Activated CD4-positive, alpha-beta T cell treated with anti-CD3 and anti-CD28 coated beads for 36 hours (primary cell): ENCODE measurements at regions of chr5 and their contacts with region 1.

Region 1: DNA sequence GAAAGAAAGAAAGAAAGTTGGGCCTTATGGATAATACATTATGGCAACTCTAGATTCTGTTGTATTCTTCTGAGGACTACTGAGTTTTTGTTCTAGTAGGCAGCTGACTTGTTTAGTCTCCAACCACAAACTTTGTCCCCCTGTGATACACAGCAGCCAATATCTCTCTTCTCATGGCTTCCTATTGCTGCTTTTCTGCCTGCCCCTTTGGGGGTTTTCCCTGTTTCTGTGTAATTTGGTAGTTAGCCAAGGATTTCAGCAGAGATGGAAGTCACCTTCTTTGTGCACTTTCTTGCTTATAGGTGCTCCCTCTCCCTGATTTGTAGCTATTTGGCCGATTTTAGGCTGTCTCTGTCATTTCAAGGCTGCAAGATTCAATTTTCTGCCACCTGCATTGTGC is 109.6 kb downstream of the FGF1 start:
- DNase-seq: no peak
- ATAC-seq: no peak
- H3K4me3 Mint-ChIP-seq: no peak overlapping the region
- H3K27ac Mint-ChIP-seq: no peak overlapping the region
- H3K4me1 Mint-ChIP-seq: peaks cover 17% of the 10 kb centered on the region
- H3K27me3 Mint-ChIP-seq: no peaks in the 10 kb centered on the region

Region 2: GRCh38 chr5:142324871-142325724 is 251.2 kb before region 1 on chr5 and contains the start of gene SPRY4:
- CTCF ChIA-PET with region 1: no interaction called
- POLR2A ChIA-PET with region 1: no interaction called
- intact Hi-C with region 1: no loop called
- DNase-seq: peak; percentile 95
- ATAC-seq: peak; percentile 89
- H3K4me3 Mint-ChIP-seq: peak within 1 kb of the TSS; percentile 77
- H3K27ac Mint-ChIP-seq: peak within 1 kb of the TSS; percentile 79
- H3K4me1 Mint-ChIP-seq: peaks cover 37% of the 10 kb centered on the region
- H3K27me3 Mint-ChIP-seq: peaks cover 36% of the 10 kb centered on the region
- total RNA-seq, gene SPRY4: 0.93 to 0.98 TPM

Region 3: GRCh38 chr5:142446131-142446959 is 130.0 kb before region 1 on chr5:
- CTCF ChIA-PET with region 1: no interaction called
- POLR2A ChIA-PET with region 1: no interaction called
- intact Hi-C with region 1: no loop called
- DNase-seq: no peak
- ATAC-seq: no peak
- H3K4me3 Mint-ChIP-seq: no peak overlapping the region
- H3K27ac Mint-ChIP-seq: no peak overlapping the region
- H3K4me1 Mint-ChIP-seq: peaks cover 16% of the 10 kb centered on the region
- H3K27me3 Mint-ChIP-seq: no peaks in the 10 kb centered on the region

Region 4: GRCh38 chr5:142587354-142587965 is 11.2 kb after region 1 on chr5:
- CTCF ChIA-PET with region 1: interaction called, 15 read pairs
- POLR2A ChIA-PET with region 1: no interaction called
- intact Hi-C with region 1: no loop called
- DNase-seq: peak; percentile 63
- ATAC-seq: no peak
- H3K4me3 Mint-ChIP-seq: no peak overlapping the region
- H3K27ac Mint-ChIP-seq: no peak overlapping the region
- H3K4me1 Mint-ChIP-seq: peaks cover 6% of the 10 kb centered on the region
- H3K27me3 Mint-ChIP-seq: peaks cover 9% of the 10 kb centered on the region

Region 5: GRCh38 chr5:143592648-143593047 is 1016.3 kb after region 1 on chr5:
- CTCF ChIA-PET with region 1: no interaction called
- POLR2A ChIA-PET with region 1: no interaction called
- intact Hi-C with region 1: no loop called
- DNase-seq: peak; percentile 44
- ATAC-seq: peak; percentile 51
- H3K4me3 Mint-ChIP-seq: no peak overlapping the region
- H3K27ac Mint-ChIP-seq: no peak overlapping the region
- H3K4me1 Mint-ChIP-seq: peaks cover 40% of the 10 kb centered on the region
- H3K27me3 Mint-ChIP-seq: no peaks in the 10 kb centered on the region